ENCODE measurements at regions of chr1 and their contacts with region 1.

Region 1: GRCh38 chr1:169546087-169546995 is 39.9 kb downstream of the F5 start:
- DNase-seq: peak in 1 of 2 donors; percentile 74
- H3K4me3 ChIP-seq: no peak overlapping the region
- H3K27ac ChIP-seq: no peak overlapping the region
- H3K4me1 ChIP-seq: no peaks in the 10 kb centered on the region
- H3K27me3 ChIP-seq: no peaks in the 10 kb centered on the region
- CTCF ChIP-seq: peak; percentile 66 to 86 (median 67)

Region 2: GRCh38 chr1:168603501-168604110 is 942.7 kb before region 1 on chr1:
- intact Hi-C with region 1: loop called (anchors 10 kb)
- DNase-seq: peak in 1 of 2 donors; percentile 82
- H3K4me3 ChIP-seq: no peak overlapping the region
- H3K27ac ChIP-seq: no peak overlapping the region
- H3K4me1 ChIP-seq: peaks cover 1 to 10% of the 10 kb centered on the region in 2 donors
- H3K27me3 ChIP-seq: no peaks in the 10 kb centered on the region
- CTCF ChIP-seq: peak; percentile 76 to 86 (median 81)

Region 3: GRCh38 chr1:169367486-169368405 is 178.6 kb before region 1 on chr1 and contains the starts of genes BLZF1 and NME7:
- intact Hi-C with region 1: loop called (anchors 5 kb)
- DNase-seq: peak; percentile 95 to 98
- H3K4me3 ChIP-seq: peak within 1 kb of the TSS; percentile 84 to 90
- H3K27ac ChIP-seq: peak within 1 kb of the TSS; percentile 64 to 80
- H3K4me1 ChIP-seq: peaks cover 0 to 6% of the 10 kb centered on the region in 2 donors
- H3K27me3 ChIP-seq: no peaks in the 10 kb centered on the region
- CTCF ChIP-seq: no peak
- total RNA-seq, gene BLZF1: 8.5 TPM
- total RNA-seq, gene NME7: 4.9 TPM

Region 4: DNA sequence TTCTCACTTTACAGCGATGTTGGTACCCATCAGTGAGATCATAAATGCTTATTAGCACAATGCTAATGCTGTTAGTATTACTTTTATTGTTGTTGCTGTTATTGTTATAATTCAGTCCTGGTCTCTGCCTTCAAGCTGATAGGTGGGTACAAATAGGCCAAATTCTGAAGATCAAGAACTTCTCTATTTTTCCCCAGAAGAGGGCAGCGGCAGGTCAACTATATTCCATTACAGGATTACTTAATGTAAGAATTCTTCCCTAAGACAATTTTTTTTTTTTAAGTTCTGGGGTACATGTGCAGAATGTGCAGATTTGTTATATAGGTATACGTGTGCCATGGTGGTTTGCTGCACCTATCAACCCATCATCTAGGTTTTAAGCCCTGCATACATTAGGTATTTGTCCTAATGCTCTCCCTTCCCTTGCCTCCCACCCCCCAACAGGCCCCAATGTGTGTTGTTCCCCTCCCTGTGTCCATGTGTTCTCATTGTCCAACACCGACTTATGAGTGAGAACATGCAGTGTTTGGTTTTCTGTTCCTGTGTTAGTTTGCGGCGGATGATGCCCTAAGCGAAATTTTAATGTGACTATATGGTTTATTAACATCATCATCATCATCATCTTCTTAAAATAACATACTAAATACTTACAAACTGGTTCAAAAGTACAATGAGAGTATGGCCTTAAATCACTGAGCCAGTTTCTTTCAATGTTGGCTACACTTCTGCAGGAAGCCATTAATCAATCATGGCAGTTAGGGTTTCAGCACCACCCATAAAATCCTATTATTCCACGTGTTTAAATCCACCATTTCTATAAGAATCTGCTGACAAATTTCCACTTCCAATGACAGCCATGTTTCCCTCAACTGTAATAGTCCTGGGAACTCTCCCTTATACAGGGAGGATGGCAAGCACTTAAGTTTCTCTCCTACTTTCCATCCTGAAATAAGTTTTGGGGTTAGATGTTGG is 79.8 kb before region 1 on chr1:
- intact Hi-C with region 1: loop called (anchors 2 kb)
- DNase-seq: no peak
- H3K4me3 ChIP-seq: no peak overlapping the region
- H3K27ac ChIP-seq: no peak overlapping the region
- H3K4me1 ChIP-seq: no peaks in the 10 kb centered on the region
- H3K27me3 ChIP-seq: no peaks in the 10 kb centered on the region
- CTCF ChIP-seq: peak; percentile 10 to 49 (median 29)

Region 5: GRCh38 chr1:169511316-169512028 is 34.9 kb before region 1 on chr1:
- intact Hi-C with region 1: loop called (anchors 2 kb)
- DNase-seq: peak in 1 of 2 donors; percentile 73
- H3K4me3 ChIP-seq: no peak overlapping the region
- H3K27ac ChIP-seq: peak overlapping the region; percentile 64 to 72
- H3K4me1 ChIP-seq: peaks cover 0 to 23% of the 10 kb centered on the region in 2 donors
- H3K27me3 ChIP-seq: no peaks in the 10 kb centered on the region
- CTCF ChIP-seq: no peak

Region 6: GRCh38 chr1:169809370-169810095 is 263.2 kb after region 1 on chr1:
- intact Hi-C with region 1: loop called (anchors 2 kb)
- DNase-seq: no peak
- H3K4me3 ChIP-seq: no peak overlapping the region
- H3K27ac ChIP-seq: no peak overlapping the region
- H3K4me1 ChIP-seq: no peaks in the 10 kb centered on the region
- H3K27me3 ChIP-seq: no peaks in the 10 kb centered on the region
- CTCF ChIP-seq: peak; percentile 30 to 65 (median 40)